ENCODE measurements at regions of chr7 and their contacts with region 1.

Region 1: GRCh38 chr7:101244375-101245146 is at the start of gene FIS1:
- H3K4me3 Mint-ChIP-seq: peak within 1 kb of the TSS; percentile 97
- H3K27ac Mint-ChIP-seq: peak within 1 kb of the TSS; percentile 94
- H3K4me1 Mint-ChIP-seq: peaks cover 54% of the 10 kb centered on the region
- H3K27me3 Mint-ChIP-seq: peaks cover 8% of the 10 kb centered on the region

Region 2: DNA sequence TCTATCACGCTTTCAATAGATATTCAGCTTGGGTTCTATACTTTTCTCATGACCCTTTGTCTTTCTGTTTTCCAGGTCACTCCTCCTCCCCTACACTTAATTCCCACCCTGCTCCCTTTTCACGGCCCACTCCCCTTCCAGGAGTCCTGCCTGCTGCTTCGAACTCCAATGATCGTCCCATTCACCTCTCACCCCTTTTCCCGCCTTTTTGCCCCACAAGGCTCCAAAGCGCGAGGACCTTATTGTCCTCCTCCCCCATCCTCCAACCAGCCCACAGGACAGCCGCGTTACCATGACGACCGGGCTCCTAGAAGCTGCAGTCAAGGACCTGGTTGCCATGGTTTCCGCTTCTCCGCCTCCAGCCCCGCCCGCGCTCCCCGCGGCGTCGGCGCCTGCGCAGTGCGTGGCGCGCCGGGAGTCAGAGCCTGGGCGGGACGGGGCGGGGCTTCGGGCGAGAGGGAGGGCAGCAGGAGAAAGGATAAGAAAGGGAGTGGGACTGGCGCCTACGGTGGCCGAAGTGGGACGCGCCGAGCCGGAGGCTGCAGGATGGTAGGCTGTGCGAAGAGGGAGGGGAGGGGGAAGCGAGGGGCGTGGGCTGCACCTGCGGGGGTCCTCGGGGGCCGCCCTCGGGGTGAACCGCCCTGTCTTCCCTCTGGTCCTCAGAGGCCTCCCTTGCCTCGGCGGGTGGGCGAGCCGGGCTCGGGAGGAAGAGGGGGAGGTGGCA is 90.4 kb before region 1 on chr7 and contains the start of gene AP1S1:
- intact Hi-C with region 1: loop called (anchors 5 kb)
- H3K4me3 Mint-ChIP-seq: peak within 1 kb of the TSS; percentile 78
- H3K27ac Mint-ChIP-seq: peak within 1 kb of the TSS; percentile 50
- H3K4me1 Mint-ChIP-seq: peaks cover 30% of the 10 kb centered on the region
- H3K27me3 Mint-ChIP-seq: peaks cover 24% of the 10 kb centered on the region

Region 3: GRCh38 chr7:101201695-101202604 is 42.6 kb before region 1 on chr7:
- intact Hi-C with region 1: no loop called
- H3K4me3 Mint-ChIP-seq: no peak overlapping the region
- H3K27ac Mint-ChIP-seq: no peak overlapping the region
- H3K4me1 Mint-ChIP-seq: peaks cover 41% of the 10 kb centered on the region
- H3K27me3 Mint-ChIP-seq: peaks cover 60% of the 10 kb centered on the region

Region 4: GRCh38 chr7:101217388-101218235 is 26.9 kb before region 1 on chr7 and contains the starts of genes PLOD3 and ZNHIT1:
- intact Hi-C with region 1: loop called (anchors 1 kb)
- H3K4me3 Mint-ChIP-seq: peak within 1 kb of the TSS; percentile 98
- H3K27ac Mint-ChIP-seq: peak within 1 kb of the TSS; percentile 88
- H3K4me1 Mint-ChIP-seq: peaks cover 65% of the 10 kb centered on the region
- H3K27me3 Mint-ChIP-seq: no peaks in the 10 kb centered on the region

Region 5: DNA sequence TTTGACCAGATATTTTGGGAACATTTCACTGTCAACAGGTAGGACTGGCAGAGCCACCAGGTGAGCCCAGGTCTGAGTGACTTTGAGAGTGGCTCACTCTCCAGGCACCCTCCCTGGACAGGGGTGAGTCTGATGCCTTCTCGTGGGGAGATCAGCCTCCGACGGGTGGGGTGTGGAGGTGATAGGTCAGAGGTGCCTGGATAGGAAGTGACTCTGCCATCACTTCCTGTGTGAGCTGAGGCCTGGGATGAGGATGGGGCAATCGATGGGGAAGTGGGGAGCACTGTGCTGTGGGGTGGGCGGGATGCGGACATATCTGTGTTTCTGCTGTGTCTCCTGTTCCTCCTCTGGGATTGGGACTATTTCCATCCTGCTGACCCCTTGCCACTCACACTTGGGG is 42.5 kb after region 1 on chr7:
- intact Hi-C with region 1: loop called (anchors 5 kb)
- H3K4me3 Mint-ChIP-seq: no peak overlapping the region
- H3K27ac Mint-ChIP-seq: no peak overlapping the region
- H3K4me1 Mint-ChIP-seq: peaks cover 29% of the 10 kb centered on the region
- H3K27me3 Mint-ChIP-seq: peaks cover 23% of the 10 kb centered on the region

Region 6: GRCh38 chr7:101333912-101334311 is 89.4 kb after region 1 on chr7:
- intact Hi-C with region 1: no loop called
- H3K4me3 Mint-ChIP-seq: no peak overlapping the region
- H3K27ac Mint-ChIP-seq: no peak overlapping the region
- H3K4me1 Mint-ChIP-seq: peaks cover 5% of the 10 kb centered on the region
- H3K27me3 Mint-ChIP-seq: peaks cover 9% of the 10 kb centered on the region

Region 7: DNA sequence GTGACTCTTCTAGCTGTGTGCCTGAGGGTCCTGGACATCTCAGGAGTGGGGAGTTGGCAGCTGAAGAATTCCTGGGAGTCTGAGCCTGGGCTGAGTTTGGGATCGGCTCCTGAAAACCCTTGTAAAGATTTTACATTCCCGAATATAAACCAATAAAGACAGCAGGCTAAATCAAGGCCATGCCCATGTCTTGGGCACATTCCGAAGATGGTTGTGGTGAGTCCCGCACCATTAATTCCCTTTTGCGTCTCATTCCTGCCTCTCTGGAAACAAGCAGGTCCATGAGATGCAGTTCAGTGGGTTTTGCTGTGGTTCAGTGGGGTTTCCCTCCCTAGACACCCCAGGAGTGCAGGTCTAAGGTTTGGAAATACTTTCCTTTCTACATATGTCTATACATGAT is 209.1 kb after region 1 on chr7:
- intact Hi-C with region 1: no loop called
- H3K4me3 Mint-ChIP-seq: no peak overlapping the region
- H3K27ac Mint-ChIP-seq: no peak overlapping the region
- H3K4me1 Mint-ChIP-seq: no peaks in the 10 kb centered on the region
- H3K27me3 Mint-ChIP-seq: peaks cover 1% of the 10 kb centered on the region